ENCODE measurements at regions of chr3 and their contacts with region 1.

Region 1: DNA sequence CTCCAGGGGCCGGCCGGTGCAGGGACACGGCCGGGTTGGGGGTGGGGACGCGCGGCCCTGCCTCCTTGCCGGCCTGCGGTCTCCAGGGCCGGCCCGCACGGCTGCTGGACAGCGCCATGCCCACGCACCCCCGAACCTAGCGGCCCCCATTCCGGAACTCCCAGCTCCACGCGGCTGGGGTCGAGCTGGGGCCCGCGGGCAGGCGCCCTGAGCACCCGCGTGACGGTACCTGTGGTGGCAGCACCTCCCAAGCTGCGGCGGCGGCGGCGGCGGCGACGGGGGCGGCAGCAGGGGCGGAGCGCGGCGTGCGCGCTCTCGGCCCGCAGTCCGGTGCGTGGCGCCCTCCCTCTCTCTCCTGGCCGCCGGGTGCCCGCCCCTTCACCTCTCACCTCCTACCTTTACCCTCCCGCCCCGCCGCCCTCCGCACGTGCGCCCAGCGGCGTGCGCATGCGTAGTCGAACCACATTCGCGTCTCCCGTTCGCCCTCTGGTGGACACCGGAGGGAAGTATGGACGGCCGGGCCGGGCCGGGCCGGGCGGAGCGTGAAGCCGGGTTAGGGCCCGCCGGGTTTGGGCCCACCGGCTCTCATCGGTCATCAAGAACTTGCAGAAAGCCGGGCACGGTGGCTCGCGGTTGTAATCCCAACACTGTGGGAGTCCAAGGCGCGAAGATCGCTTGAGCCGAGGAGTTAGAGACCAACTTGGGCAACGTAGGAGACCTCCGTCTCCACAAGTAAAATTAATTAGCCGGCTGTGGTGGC is at the start of gene SCAP:
- DNase-seq: peak; percentile 94 to 95
- H3K4me3 ChIP-seq: peak within 1 kb of the TSS; percentile 74
- H3K4me3 Mint-ChIP-seq: peak within 1 kb of the TSS; percentile 89
- H3K27ac Mint-ChIP-seq: peak within 1 kb of the TSS; percentile 82
- H3K4me1 ChIP-seq: peaks cover 12% of the 10 kb centered on the region
- H3K4me1 Mint-ChIP-seq: peaks cover 11% of the 10 kb centered on the region
- H3K27me3 ChIP-seq: no peaks in the 10 kb centered on the region
- H3K27me3 Mint-ChIP-seq: no peaks in the 10 kb centered on the region
- CTCF ChIP-seq: peak; percentile 80 to 84
- total RNA-seq, gene SCAP: 104 and 115 TPM in 2 replicates

Region 2: GRCh38 chr3:47513125-47513929 is 37.6 kb after region 1 on chr3 and contains the start of gene ELP6:
- CTCF ChIA-PET with region 1: no interaction called
- POLR2A ChIA-PET with region 1: no interaction called
- intact Hi-C with region 1: loop called (anchors 2 kb)
- DNase-seq: peak; percentile 97
- H3K4me3 ChIP-seq: peak within 1 kb of the TSS; percentile 49
- H3K4me3 Mint-ChIP-seq: peak within 1 kb of the TSS; percentile 89
- H3K27ac Mint-ChIP-seq: peak within 1 kb of the TSS; percentile 94
- H3K4me1 ChIP-seq: no peaks in the 10 kb centered on the region
- H3K4me1 Mint-ChIP-seq: peaks cover 6% of the 10 kb centered on the region
- H3K27me3 ChIP-seq: no peaks in the 10 kb centered on the region
- H3K27me3 Mint-ChIP-seq: no peaks in the 10 kb centered on the region
- CTCF ChIP-seq: peak; percentile 41 to 74
- total RNA-seq, gene ELP6: 41.0 and 42.0 TPM in 2 replicates

Measured in Caco-2 (cell line).